Panc1 (cell line): ENCODE measurements at regions of chr7 and their contacts with region 1.

Region 1: DNA sequence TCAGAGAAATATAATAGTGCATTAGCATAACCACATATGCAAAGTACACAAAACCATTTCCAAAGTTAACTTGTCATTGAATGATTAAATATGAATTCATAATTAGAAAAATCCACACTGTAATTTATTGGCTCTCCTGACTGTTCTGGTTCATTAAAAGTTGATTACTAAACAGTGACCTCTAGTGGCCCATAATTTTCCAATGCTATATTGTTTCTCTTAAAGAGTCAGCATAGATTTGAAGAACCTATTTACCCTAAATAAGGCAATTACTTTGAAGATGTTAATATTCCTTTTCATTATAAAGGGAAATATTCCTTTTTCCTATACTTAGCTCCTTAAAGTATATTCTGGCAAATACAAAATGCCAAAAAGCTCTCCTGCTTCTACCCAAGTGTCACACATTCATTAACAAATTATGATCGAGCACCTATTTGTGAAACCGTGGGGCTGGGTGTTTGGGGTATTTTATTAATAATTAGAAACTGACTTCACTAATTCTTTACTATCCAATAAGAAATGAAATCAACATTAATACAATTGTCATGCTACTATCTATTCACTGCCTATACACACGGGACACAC is 86.2 kb downstream of the HIBADH start:
- DNase-seq: peak; percentile 25
- ATAC-seq: peak; percentile 83
- H3K4me3 ChIP-seq: no peak overlapping the region
- H3K27ac ChIP-seq: no peak overlapping the region
- H3K4me1 ChIP-seq: peaks cover 4% of the 10 kb centered on the region; the same call in 1 of the 2 replicates
- H3K27me3 ChIP-seq: no peaks in the 10 kb centered on the region
- CTCF ChIP-seq: peak; percentile 73; the same call in 1 of the 2 replicates

Region 2: DNA sequence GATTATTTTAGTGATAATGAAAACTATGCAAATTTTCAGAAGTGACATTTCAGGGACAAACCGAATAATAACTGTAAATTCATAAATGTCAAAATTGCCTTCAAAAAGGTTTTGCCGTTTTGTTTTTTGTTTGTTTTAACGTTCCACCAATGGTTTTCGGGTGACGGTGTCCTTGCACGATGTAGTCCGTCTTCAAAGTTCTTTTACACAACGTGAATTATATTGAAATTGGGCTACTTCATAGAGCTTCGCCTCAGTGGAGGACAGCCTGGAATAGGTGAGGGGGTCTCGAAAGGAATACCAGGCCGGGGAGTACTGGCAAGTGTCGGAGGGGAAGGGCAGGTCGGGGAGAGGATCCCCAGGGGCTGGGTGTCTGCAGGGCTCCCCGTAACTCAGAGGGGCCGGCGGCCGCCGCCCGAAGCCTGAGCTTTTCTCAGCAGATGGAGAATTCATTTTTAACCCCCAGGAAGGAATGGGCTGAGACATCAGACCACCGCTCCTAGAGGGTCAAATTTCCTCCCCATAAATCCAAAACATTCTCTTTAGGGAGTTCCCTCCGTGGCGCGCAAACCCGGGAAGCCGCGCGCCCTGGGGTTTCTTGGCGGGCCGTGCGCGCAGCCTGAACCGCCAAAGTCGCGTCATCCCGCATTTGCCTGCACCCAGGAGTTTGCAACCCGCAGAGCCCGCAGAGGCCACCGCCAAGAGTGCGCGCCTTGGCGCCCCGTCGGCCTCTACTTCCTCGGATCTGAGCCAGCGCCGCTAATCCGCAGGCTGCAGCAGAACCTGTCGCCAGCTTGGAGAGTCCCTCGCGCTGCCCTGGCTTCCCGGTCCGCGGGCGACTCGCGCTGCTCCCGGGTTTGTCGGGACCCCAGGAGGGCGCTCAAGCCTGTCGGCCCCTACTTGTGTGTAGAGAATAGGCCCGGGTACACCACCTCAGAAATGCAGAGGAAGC is 351.2 kb before region 1 on chr7:
- CTCF ChIA-PET with region 1: no interaction called
- POLR2A ChIA-PET with region 1: no interaction called
- in situ Hi-C with region 1: no loop called
- intact Hi-C with region 1: loop called (anchors 5 kb)
- DNase-seq: no peak
- ATAC-seq: peak; percentile 35; the same call in 1 of the 2 replicates
- H3K4me3 ChIP-seq: 0 out of 4 replicates have a peak overlapping the region, but pooled peaks of 1 of the 2 experiments have one; percentile 6
- H3K27ac ChIP-seq: no peak overlapping the region
- H3K4me1 ChIP-seq: peaks cover 3% of the 10 kb centered on the region; the same call in 1 of the 2 replicates
- H3K27me3 ChIP-seq: peaks cover 20% of the 10 kb centered on the region
- CTCF ChIP-seq: no peak

Region 3: DNA sequence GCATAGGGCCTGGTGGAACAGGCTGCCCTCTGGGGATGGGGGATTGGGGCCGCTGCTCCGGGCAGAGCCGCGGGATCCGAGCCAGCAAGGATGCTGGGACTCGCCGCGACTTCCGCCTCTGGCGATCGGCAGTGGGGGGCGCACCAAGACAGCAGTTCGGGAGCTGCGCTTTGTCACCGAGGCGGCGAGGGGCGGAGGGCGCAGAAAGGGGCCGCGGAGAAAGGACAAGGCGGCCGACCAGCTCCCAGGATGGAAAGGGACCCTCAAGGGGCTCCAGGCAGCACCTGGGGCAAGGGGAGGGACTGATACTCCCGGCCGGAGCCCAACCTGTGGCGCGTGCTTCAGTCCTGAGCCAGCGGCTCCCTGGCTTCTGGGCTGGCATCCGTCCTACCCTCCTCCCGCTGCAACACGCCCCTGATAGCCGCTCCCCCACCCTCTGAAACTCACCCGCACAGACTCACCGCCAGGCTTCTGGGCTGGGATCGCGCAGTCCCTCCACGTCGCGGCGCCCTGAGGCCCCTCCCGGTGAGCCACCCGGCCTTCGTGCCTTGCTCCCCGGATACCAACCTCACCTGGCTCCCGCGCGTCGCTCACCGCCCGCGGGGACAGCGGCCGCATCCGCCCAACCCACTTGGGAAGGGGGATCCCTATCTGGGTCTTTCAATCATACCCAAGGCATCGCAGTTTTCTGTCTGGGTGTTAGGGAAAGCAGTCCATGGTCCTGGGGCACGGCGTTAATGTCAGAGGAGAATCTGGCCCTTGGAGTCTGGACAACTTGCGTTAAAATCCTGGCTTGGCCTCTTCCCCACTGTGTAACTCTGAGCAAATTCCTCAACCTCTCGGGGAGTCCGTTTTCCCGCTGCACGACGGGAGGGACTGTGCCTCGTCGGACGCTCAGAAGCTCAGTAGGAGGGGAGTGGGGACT is 340.8 kb before region 1 on chr7:
- CTCF ChIA-PET with region 1: interaction called, 3 read pairs
- POLR2A ChIA-PET with region 1: no interaction called
- in situ Hi-C with region 1: no loop called
- intact Hi-C with region 1: loop called (anchors 2 kb)
- DNase-seq: no peak
- ATAC-seq: peak; percentile 92
- H3K4me3 ChIP-seq: peak overlapping the region; percentile 47 to 76
- H3K27ac ChIP-seq: peak overlapping the region; percentile 64; the same call in 1 of the 2 replicates
- H3K4me1 ChIP-seq: 0 out of 2 replicates have a peak, but pooled peaks cover 7% of the 10 kb centered on the region
- H3K27me3 ChIP-seq: no peaks in the 10 kb centered on the region; the same call in 1 of the 2 replicates
- CTCF ChIP-seq: peak; percentile 89; the same call in 1 of the 2 replicates

Region 4: DNA sequence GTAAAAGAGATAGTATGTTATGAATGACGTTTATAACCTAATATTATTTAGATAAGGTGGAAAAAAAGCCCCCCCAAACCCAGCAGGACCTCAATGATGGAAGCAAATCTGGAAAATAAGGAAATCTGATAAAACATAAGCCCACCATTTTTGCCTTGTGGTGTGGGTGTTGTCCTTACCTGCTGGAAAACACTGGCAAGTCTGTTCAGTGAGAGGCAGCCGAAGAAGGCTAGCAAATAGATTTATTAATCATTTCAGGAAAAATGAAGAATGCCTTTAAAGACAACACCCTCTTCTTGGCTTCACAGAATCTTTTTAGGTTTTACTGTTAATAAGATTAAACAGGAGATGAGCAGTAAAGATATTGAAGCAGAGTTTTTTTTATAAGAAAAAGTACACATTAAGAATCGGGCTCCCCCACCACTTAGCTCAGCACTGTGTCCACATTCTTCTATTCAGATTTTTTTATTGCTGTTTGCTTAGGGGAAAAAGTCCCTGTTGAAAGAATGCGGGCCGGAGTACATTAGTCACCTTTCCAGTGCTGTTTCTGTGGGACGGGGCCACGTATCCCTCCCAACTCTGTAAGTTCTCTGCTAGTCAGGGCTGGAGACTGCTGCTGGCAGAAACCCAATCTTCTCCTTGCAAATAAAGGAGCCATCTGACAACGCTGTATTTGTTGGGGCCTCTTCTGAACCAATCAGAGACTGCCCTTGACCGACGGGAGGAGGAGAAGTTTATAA is 229.8 kb before region 1 on chr7:
- CTCF ChIA-PET with region 1: no interaction called
- POLR2A ChIA-PET with region 1: no interaction called
- in situ Hi-C with region 1: no loop called
- intact Hi-C with region 1: loop called (anchors 10 kb)
- DNase-seq: peak; percentile 38
- ATAC-seq: peak; percentile 98
- H3K4me3 ChIP-seq: peak overlapping the region; percentile 12 to 44; a peak in 3 of 4 replicates
- H3K27ac ChIP-seq: peak overlapping the region; percentile 90
- H3K4me1 ChIP-seq: peaks cover 33% of the 10 kb centered on the region
- H3K27me3 ChIP-seq: no peaks in the 10 kb centered on the region
- CTCF ChIP-seq: no peak